ENCODE measurements at regions of chr3 and their contacts with region 1.

Region 1: DNA sequence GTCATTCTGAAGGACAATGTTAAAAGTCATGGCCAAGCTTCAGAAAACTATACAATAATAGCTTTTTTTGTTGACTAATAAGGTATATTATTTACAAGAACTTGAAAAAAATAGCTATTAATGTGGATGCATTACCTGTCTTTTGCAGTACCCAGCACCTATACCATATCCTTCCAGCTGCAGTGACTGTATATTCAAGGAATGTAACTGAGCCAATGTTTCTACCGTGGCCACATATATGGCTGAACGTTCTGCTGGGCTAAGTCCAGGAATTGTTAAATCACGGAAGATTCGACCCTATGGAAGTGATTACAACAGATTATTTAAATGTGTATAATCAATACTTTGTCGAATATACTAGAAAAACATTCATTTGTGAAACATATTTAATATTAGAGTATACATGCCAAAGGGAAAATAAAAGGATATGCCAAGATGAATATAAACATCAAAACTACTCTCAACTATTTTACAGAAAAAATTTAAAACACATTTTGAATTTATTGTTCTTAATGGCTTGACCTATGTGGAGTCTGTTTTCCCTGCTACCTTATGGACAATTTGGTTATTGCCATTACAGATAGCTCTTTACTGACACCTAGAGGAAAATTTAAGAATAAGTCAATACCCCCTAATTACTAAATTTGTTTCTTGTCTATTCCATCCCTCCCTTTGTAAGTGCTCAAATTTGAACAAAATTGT is 17.6 kb downstream of the ACAD11 start:
- DNase-seq: no peak
- ATAC-seq: peak; percentile 85
- H3K4me3 ChIP-seq: no peak overlapping the region
- H3K27ac ChIP-seq: no peak overlapping the region
- H3K4me1 ChIP-seq: no peaks in the 10 kb centered on the region
- H3K27me3 ChIP-seq: no peaks in the 10 kb centered on the region
- CTCF ChIP-seq: peak; percentile 53 to 64 (median 55); a peak in 5 of 6 replicates
- EP300 ChIP-seq: no peak
- POLR2A ChIP-seq: no peak
- RAD21 ChIP-seq: peak; percentile 74

Region 2: DNA sequence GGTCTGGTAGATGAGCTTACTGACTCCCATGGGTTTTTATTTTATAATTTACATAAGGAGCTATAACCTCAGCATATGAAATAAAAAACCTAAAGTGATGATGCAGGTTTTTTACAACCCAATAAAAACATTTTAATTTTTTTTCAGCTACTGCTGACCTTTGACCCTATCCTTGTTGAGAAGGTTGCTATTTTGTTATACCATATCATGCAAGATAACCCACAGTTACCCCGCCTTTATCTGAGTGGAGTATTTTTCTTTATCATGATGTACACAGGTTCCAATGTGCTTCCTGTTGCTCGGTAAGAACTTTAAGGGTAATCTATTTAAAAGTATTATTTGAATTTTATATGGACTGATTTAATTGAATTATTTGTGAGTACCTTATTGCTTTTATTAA is 153.8 kb before region 1 on chr3:
- CTCF ChIA-PET with region 1: interaction called, 11 read pairs
- POLR2A ChIA-PET with region 1: no interaction called
- RAD21 ChIA-PET with region 1: no interaction called
- SMC1A ChIA-PET with region 1: no interaction called
- in situ Hi-C with region 1: no loop called
- intact Hi-C with region 1: no loop called
- DNase-seq: no peak
- ATAC-seq: no peak
- H3K4me3 ChIP-seq: no peak overlapping the region
- H3K27ac ChIP-seq: no peak overlapping the region
- H3K4me1 ChIP-seq: no peaks in the 10 kb centered on the region
- H3K27me3 ChIP-seq: no peaks in the 10 kb centered on the region
- CTCF ChIP-seq: no peak
- EP300 ChIP-seq: no peak
- POLR2A ChIP-seq: no peak
- RAD21 ChIP-seq: no peak

Region 3: GRCh38 chr3:132535575-132536441 is 106.2 kb before region 1 on chr3:
- CTCF ChIA-PET with region 1: interaction called, 203 read pairs
- POLR2A ChIA-PET with region 1: interaction called, 4 read pairs
- RAD21 ChIA-PET with region 1: interaction called, 53 read pairs
- SMC1A ChIA-PET with region 1: interaction called, 100 read pairs
- in situ Hi-C with region 1: loop called (anchors 10 kb)
- intact Hi-C with region 1: loop called (anchors 1 kb)
- DNase-seq: peak; percentile 8
- ATAC-seq: peak; percentile 83
- H3K4me3 ChIP-seq: no peak overlapping the region
- H3K27ac ChIP-seq: no peak overlapping the region
- H3K4me1 ChIP-seq: no peaks in the 10 kb centered on the region
- H3K27me3 ChIP-seq: no peaks in the 10 kb centered on the region
- CTCF ChIP-seq: peak; percentile 43 to 60 (median 58); a peak in 5 of 6 replicates
- EP300 ChIP-seq: no peak
- POLR2A ChIP-seq: no peak
- RAD21 ChIP-seq: peak; percentile 69

Region 4: DNA sequence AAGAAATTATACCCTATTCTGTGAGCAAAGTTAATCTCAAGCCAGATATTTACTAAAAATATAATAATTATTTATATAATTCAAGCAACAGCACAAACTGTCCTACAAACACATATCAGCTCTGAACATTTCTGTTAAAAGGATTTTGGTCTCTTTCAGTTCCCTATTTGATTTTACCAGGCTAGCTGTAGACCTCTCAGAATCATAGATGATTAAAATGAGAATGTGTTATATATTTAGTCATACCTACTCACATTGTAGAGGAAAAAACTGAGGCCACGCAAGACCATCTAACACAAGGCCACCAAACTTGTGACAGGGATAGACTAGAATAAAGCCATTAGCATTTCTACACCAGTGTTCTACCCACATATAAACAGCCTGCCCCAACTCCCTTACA is 16.4 kb before region 1 on chr3:
- CTCF ChIA-PET with region 1: interaction called, 21 read pairs
- POLR2A ChIA-PET with region 1: no interaction called
- RAD21 ChIA-PET with region 1: interaction called, 6 read pairs
- SMC1A ChIA-PET with region 1: interaction called, 10 read pairs
- in situ Hi-C with region 1: no loop called
- intact Hi-C with region 1: no loop called
- DNase-seq: no peak
- ATAC-seq: peak; percentile 95
- H3K4me3 ChIP-seq: no peak overlapping the region
- H3K27ac ChIP-seq: 0 out of 2 replicates have a peak overlapping the region, but pooled peaks have one; percentile 25
- H3K4me1 ChIP-seq: peaks cover 12% of the 10 kb centered on the region
- H3K27me3 ChIP-seq: no peaks in the 10 kb centered on the region
- CTCF ChIP-seq: no peak
- EP300 ChIP-seq: no peak; a peak in 1 of 4 replicates
- POLR2A ChIP-seq: no peak
- RAD21 ChIP-seq: no peak

Region 5: DNA sequence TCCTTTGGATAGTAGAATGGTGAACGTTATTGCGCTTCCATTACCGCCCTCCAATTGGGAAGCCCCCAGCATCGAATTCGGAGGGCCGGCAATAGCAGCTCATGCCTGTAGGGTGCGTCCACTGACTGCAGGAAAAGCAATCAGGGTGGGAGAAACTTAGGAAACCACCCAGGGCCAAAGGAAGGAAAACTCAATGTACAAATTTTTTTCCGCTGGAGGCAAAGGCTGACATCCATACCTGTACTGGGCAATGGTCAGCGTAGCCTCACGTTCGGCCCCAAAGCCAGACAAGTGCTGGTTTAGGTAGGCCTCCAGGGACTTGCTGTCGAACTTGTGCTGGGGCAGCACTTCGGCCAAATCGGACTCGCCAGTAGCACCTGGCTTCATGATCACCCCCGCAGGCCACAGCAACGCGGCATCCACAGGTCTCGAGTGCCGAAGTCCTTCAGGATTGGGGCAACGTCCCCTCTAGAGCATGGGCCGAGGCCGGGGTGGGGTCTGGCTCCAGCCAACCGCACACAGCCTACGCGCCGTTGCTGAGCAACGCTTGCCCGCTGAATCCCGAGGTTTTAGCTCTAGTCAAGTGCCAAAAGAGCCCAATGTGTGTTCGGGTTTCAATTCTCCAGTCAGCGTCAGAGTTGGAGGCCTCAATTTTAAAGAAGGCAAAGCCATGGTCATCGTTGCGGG is 17.5 kb after region 1 on chr3 and contains the start of gene ACAD11:
- CTCF ChIA-PET with region 1: interaction called, 27 read pairs
- POLR2A ChIA-PET with region 1: interaction called, 4 read pairs
- RAD21 ChIA-PET with region 1: interaction called, 4 read pairs
- SMC1A ChIA-PET with region 1: interaction called, 3 read pairs
- in situ Hi-C with region 1: no loop called
- intact Hi-C with region 1: no loop called
- DNase-seq: peak; percentile 35
- ATAC-seq: peak; percentile 71
- H3K4me3 ChIP-seq: peak within 1 kb of the TSS; percentile 99
- H3K27ac ChIP-seq: peak within 1 kb of the TSS; percentile 89
- H3K4me1 ChIP-seq: no peaks in the 10 kb centered on the region
- H3K27me3 ChIP-seq: no peaks in the 10 kb centered on the region
- CTCF ChIP-seq: peak; percentile 70 to 77 (median 72)
- EP300 ChIP-seq: no peak
- POLR2A ChIP-seq: no peak
- RAD21 ChIP-seq: peak; percentile 48
- polyA plus RNA-seq, gene ACAD11: 2.4 to 4.7 TPM

Measured in GM12878 (cell line).